CD8-positive, alpha-beta T cell (primary cell): ENCODE measurements at regions of chr2 and their contacts with region 1.

Region 1: GRCh38 chr2:204108330-204108751 is 171.8 kb downstream of the ICOS start:
- DNase-seq: peak; percentile 5 to 81 (median 45)
- ATAC-seq: peak; percentile 74
- H3K4me3 ChIP-seq: no peak overlapping the region
- H3K4me3 Mint-ChIP-seq: peak overlapping the region; percentile 57
- H3K27ac ChIP-seq: no peak overlapping the region
- H3K27ac Mint-ChIP-seq: no peak overlapping the region
- H3K4me1 ChIP-seq: peaks cover 30% of the 10 kb centered on the region
- H3K4me1 Mint-ChIP-seq: peaks cover 37% of the 10 kb centered on the region
- H3K27me3 ChIP-seq: no peaks in the 10 kb centered on the region
- H3K27me3 Mint-ChIP-seq: no peaks in the 10 kb centered on the region
- CTCF ChIP-seq: peak; percentile 82

Region 2: DNA sequence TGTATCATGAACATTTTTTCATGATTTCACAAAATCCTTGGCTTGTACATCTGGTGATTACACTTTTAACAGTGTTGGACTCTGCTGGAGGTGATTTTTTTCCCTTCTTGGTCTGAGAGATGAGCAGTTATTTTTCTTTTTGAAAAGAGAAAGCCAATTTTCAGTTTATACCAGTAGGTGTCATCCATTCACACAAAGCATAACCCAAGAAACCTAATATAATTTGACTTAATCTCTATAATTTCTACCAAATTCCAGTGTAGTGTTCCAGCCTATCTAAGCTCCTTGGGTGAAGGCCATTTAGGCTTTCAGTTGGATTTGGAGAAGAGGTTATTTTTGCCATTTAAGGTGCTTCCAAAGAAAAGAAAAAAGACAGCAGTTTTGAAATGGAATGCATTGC is 179.5 kb before region 1 on chr2:
- CTCF ChIA-PET with region 1: interaction called, 5 read pairs
- POLR2A ChIA-PET with region 1: no interaction called
- intact Hi-C with region 1: loop called in 1 of 2 experiments (anchors 5 kb)
- DNase-seq: peak in 2 of 9 experiments; percentile 43 to 59
- ATAC-seq: peak; percentile 42
- H3K4me3 ChIP-seq: no peak overlapping the region
- H3K4me3 Mint-ChIP-seq: no peak overlapping the region
- H3K27ac ChIP-seq: no peak overlapping the region
- H3K27ac Mint-ChIP-seq: no peak overlapping the region
- H3K4me1 ChIP-seq: peaks cover 15% of the 10 kb centered on the region
- H3K4me1 Mint-ChIP-seq: peaks cover 33% of the 10 kb centered on the region
- H3K27me3 ChIP-seq: no peaks in the 10 kb centered on the region
- H3K27me3 Mint-ChIP-seq: no peaks in the 10 kb centered on the region
- CTCF ChIP-seq: peak; percentile 52

Region 3: DNA sequence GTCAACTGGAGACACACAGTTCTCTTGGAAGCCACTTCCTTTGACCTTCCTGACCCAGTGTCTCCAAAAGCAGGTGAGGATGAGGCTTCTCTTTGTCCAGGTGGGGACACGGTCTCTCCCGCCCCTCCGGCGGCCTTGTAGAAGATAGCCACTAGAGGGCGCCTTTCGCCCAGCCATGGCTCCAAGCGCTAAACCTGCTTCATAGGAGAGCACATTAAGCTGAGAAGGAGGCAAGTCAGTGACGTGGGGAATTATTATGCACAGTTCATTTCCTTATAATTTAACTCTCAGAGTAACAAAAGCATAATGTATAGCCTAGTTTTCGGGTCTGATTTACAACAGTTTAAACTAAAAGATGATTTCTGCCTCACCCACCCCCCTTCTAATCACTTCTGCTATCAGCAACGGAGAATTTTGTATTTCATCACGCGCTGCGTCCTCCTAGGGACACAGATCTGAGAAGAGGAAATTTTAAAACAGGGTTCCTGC is 37.0 kb after region 1 on chr2:
- CTCF ChIA-PET with region 1: interaction called, 9 read pairs
- POLR2A ChIA-PET with region 1: no interaction called
- intact Hi-C with region 1: loop called in 1 of 2 experiments (anchors 1 kb)
- DNase-seq: peak; percentile 50 to 84 (median 76)
- ATAC-seq: peak; percentile 92
- H3K4me3 ChIP-seq: peak overlapping the region; percentile 46 to 49
- H3K4me3 Mint-ChIP-seq: peak overlapping the region; percentile 90
- H3K27ac ChIP-seq: no peak overlapping the region
- H3K27ac Mint-ChIP-seq: peak overlapping the region; percentile 84
- H3K4me1 ChIP-seq: no peaks in the 10 kb centered on the region
- H3K4me1 Mint-ChIP-seq: peaks cover 10% of the 10 kb centered on the region
- H3K27me3 ChIP-seq: no peaks in the 10 kb centered on the region
- H3K27me3 Mint-ChIP-seq: peaks cover 18% of the 10 kb centered on the region
- CTCF ChIP-seq: peak; percentile 98

Region 4: DNA sequence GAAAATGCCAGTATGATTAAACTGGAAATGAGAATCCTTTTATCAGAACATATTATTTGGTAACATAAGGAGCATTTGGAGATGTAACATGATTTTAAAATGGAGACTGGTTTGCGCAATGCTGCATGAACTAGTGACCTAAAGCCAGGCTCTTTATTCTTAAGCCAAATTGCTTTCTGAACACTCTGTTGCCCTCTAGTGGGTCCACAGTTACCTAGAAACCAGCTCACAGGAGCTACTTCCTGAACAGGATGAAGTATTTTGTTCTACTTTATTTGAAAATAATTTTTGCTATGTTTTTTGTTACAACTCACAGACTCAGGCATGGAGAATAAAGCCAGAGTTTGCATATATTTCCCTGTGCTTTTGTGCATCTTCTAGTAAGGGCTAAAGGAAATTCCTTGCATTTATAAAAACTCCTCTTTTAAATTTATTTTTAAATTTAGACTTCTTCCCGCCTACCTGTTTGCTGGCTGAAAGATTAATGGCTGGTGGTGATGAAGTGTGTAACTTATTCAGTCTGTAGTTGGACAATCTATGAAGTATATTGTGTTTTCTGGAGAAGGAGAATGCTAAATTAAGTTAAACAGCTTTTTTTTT is 583.7 kb after region 1 on chr2:
- CTCF ChIA-PET with region 1: no interaction called
- POLR2A ChIA-PET with region 1: no interaction called
- intact Hi-C with region 1: loop called in 1 of 2 experiments (anchors 5 kb)
- DNase-seq: peak in 2 of 9 experiments; percentile 29 to 44
- ATAC-seq: no peak
- H3K4me3 ChIP-seq: no peak overlapping the region
- H3K4me3 Mint-ChIP-seq: no peak overlapping the region
- H3K27ac ChIP-seq: no peak overlapping the region
- H3K27ac Mint-ChIP-seq: no peak overlapping the region
- H3K4me1 ChIP-seq: peaks cover 5% of the 10 kb centered on the region
- H3K4me1 Mint-ChIP-seq: peaks cover 8% of the 10 kb centered on the region
- H3K27me3 ChIP-seq: no peaks in the 10 kb centered on the region
- H3K27me3 Mint-ChIP-seq: no peaks in the 10 kb centered on the region
- CTCF ChIP-seq: peak; percentile 44

Region 5: GRCh38 chr2:205885492-205886099 is 1777.3 kb after region 1 on chr2:
- CTCF ChIA-PET with region 1: no interaction called
- POLR2A ChIA-PET with region 1: no interaction called
- intact Hi-C with region 1: loop called in 1 of 2 experiments (anchors 10 kb)
- DNase-seq: peak; percentile 6 to 56 (median 30)
- ATAC-seq: no peak
- H3K4me3 ChIP-seq: no peak overlapping the region
- H3K4me3 Mint-ChIP-seq: no peak overlapping the region
- H3K27ac ChIP-seq: no peak overlapping the region
- H3K27ac Mint-ChIP-seq: no peak overlapping the region
- H3K4me1 ChIP-seq: no peaks in the 10 kb centered on the region
- H3K4me1 Mint-ChIP-seq: no peaks in the 10 kb centered on the region
- H3K27me3 ChIP-seq: peaks cover 0 to 3% of the 10 kb centered on the region in 2 experiments
- H3K27me3 Mint-ChIP-seq: peaks cover 33% of the 10 kb centered on the region
- CTCF ChIP-seq: peak; percentile 47

Region 6: GRCh38 chr2:205925373-205926337 is 1817.3 kb after region 1 on chr2:
- CTCF ChIA-PET with region 1: interaction called, 3 read pairs
- POLR2A ChIA-PET with region 1: no interaction called
- intact Hi-C with region 1: loop called in 1 of 2 experiments (anchors 5 kb)
- DNase-seq: peak; percentile 31 to 80 (median 66)
- ATAC-seq: peak; percentile 79
- H3K4me3 ChIP-seq: no peak overlapping the region
- H3K4me3 Mint-ChIP-seq: no peak overlapping the region
- H3K27ac ChIP-seq: no peak overlapping the region
- H3K27ac Mint-ChIP-seq: no peak overlapping the region
- H3K4me1 ChIP-seq: peaks cover 10% of the 10 kb centered on the region
- H3K4me1 Mint-ChIP-seq: peaks cover 11% of the 10 kb centered on the region
- H3K27me3 ChIP-seq: peaks cover 3 to 7% of the 10 kb centered on the region in 2 experiments
- H3K27me3 Mint-ChIP-seq: peaks cover 41% of the 10 kb centered on the region
- CTCF ChIP-seq: peak; percentile 71

Region 7: DNA sequence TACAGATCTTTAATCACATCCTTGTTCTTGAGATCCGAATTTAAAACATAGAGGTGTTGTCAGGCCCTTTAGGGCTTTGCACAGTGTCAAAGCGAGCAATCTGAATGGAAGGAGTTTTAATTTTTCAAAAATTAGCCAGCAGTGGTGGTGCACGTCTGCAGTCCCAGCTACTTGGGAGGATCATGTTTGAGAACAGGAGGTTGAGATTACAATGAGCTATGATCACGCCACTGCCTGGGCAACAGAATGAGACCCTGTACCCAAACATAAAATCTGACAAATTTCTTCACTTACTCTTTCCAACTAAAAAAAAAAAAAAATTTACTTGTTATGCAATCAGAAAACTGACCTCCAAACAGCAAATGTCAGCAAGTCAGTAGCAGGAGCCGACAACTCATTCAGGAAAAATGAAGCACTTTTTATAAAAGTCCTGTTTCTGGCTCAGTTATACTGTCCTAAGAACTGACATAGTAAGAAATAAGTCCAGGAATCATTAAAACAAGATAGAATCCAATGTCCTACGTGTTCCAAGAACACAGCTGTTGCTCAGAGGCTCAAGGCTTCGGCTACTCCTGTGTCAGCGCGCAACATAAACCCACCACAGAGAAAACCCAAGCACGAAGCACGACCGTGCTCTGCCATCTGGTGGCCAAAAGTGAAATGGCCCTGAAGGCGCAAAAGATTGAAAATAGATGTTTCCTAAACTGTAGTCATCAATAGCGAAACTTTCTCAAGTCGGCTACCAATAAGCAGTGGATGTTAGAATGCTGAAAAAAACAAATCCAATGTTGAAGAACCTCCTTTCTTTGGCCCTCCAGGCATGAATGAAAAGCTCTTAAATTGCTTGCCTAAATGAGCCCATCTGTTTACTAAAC is 1839.5 kb after region 1 on chr2:
- CTCF ChIA-PET with region 1: interaction called, 7 read pairs
- POLR2A ChIA-PET with region 1: no interaction called
- intact Hi-C with region 1: loop called (anchors 1 to 2 kb)
- DNase-seq: peak; percentile 19 to 67 (median 52)
- ATAC-seq: peak; percentile 71
- H3K4me3 ChIP-seq: no peak overlapping the region
- H3K4me3 Mint-ChIP-seq: no peak overlapping the region
- H3K27ac ChIP-seq: no peak overlapping the region
- H3K27ac Mint-ChIP-seq: no peak overlapping the region
- H3K4me1 ChIP-seq: no peaks in the 10 kb centered on the region
- H3K4me1 Mint-ChIP-seq: peaks cover 4% of the 10 kb centered on the region
- H3K27me3 ChIP-seq: peaks cover 0 to 4% of the 10 kb centered on the region in 2 experiments
- H3K27me3 Mint-ChIP-seq: peaks cover 27% of the 10 kb centered on the region
- CTCF ChIP-seq: peak; percentile 80